ENCODE measurements at regions of chr9 and their contacts with region 1.

Region 1: GRCh38 chr9:127980706-127981558 is at the start of gene EEIG1:
- DNase-seq: peak; percentile 96
- H3K4me3 ChIP-seq: peak within 1 kb of the TSS; percentile 80
- H3K27ac ChIP-seq: peak within 1 kb of the TSS; percentile 96
- H3K4me1 ChIP-seq: peaks cover 66% of the 10 kb centered on the region
- CTCF ChIP-seq: no peak
- total RNA-seq, gene EEIG1: 25.8 and 34.7 TPM in 2 replicates

Region 2: DNA sequence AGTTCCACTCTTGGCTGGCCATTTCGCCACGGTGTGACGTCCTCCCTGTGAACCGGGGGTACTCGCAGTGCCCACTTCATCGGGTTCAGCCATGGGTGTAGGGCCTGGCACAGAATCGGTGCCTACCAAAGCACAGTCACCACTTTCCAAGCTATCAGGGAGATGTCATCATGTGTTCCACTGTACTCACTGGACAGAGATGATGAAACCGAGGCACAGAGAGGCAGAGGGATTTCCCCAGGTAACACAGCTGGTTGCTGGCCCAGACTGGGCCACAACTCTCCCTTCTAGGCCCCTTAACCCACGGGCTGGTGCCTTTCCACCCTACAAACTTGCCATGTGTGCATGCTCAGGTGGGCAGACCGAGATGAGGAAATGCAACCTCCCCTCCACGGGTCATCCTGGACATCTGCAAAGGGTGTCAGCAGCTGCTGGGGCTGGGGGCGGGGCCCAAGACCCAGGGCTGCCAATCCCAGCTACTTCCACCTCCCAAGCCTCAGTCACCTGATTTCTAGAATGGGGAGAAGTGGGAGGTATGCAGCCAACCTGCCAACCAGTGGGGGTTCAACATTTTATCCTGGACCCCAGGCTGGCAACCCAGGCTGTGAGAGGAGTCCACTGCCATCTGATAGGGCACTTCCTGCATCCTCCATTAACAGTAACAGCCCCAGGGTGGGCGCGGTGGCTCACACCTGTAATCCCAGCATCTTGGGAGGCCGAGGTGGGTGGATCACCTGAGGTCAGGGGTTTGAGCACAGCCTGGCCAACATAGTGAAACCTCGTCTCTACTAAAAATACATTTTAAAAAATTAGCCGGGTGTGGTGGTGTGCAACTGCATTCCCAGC is 201.6 kb before region 1 on chr9:
- CTCF ChIA-PET with region 1: no interaction called
- POLR2A ChIA-PET with region 1: interaction called, 6 read pairs
- intact Hi-C with region 1: loop called (anchors 5 kb)
- DNase-seq: peak; percentile 94
- H3K4me3 ChIP-seq: peak overlapping the region; percentile 88
- H3K27ac ChIP-seq: peak overlapping the region; percentile 95
- H3K4me1 ChIP-seq: peaks cover 72% of the 10 kb centered on the region
- CTCF ChIP-seq: no peak

Region 3: DNA sequence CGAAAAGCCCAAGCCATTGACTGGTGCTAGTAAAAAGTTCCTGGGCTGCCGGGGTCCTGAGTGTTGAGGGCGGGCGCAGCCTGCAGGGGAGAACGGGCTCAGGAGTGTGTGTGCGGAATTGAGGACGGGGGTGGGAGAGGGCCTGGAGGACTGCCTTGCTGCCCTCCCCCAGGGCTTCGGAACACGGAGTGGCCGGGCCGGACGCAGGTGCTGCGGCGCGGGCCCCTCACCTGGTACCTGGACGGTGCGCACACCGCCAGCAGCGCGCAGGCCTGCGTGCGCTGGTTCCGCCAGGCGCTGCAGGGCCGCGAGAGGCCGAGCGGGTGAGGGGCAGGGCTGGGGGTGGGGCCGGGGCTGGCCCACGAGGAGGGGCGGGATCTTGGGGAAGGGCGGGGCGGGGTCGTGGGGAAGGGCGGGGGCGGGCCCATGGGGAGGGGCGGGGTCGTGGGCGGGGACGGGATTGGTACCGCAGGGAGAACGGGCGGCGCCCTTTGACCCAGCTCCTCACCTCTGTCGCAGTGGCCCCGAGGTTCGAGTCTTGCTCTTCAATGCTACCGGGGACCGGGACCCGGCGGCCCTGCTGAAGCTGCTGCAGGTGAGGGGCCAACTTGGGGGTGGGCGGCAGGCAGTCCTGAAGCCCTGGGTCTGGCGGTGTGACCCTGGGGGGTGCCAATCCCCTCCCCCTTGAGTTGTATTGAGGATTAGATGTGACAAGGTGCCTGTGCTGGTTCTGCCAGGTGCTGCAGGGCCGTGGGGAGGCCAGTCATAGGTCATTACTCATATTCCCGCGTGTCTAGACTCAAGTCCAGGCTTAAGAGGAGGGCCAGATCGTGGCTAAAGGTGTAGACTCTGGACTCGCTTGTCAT is 171.2 kb before region 1 on chr9:
- CTCF ChIA-PET with region 1: no interaction called
- POLR2A ChIA-PET with region 1: no interaction called
- intact Hi-C with region 1: no loop called
- DNase-seq: peak; percentile 68
- H3K4me3 ChIP-seq: no peak overlapping the region
- H3K27ac ChIP-seq: peak overlapping the region; percentile 42
- H3K4me1 ChIP-seq: peaks cover 18% of the 10 kb centered on the region
- CTCF ChIP-seq: no peak

Region 4: DNA sequence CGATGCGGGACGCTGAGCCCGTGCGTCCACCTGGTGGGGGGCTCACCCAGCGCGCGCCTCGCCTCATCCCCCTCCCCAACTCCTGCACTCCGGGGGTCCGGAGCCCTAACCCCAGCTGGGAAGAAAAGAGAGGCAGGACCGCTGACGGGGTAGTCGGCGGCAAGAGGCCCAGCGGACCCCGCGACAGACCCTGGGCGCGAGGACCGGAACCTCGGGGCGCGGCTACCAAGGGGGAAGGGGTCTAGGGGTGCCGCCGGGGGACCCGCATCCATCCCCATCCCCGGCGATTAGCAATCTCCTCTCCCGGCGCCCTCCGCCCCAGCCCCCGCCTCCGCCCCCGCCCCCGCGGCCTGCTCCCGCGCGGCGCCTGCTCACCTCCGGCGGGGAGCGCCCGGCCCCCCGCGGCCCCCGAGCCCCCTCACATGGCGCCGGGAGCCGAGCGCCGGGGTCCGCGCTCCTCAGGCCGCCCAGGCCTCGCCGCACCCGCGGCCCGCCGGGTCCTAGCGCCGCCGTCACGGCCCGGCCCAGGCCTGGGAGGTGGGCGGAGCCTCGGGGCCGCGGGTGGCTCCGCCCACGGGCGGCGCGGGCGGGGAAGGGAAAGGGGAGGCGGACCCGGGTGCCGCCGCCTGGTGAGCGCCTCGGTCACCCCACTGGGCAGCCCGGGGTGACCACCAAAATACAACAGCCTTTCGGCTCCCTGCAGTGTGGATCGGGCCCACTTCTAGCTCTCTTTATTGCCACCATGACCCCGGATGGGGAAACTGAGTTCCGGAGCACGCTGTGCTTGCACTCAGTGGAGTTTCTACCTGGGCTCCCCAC is 81.6 kb before region 1 on chr9 and contains the start of gene ST6GALNAC6:
- CTCF ChIA-PET with region 1: no interaction called
- POLR2A ChIA-PET with region 1: no interaction called
- intact Hi-C with region 1: no loop called
- DNase-seq: peak; percentile 88
- H3K4me3 ChIP-seq: peak within 1 kb of the TSS; percentile 81
- H3K27ac ChIP-seq: peak within 1 kb of the TSS; percentile 94
- H3K4me1 ChIP-seq: peaks cover 67% of the 10 kb centered on the region
- CTCF ChIP-seq: no peak
- total RNA-seq, gene ST6GALNAC6: 38.8 and 43.7 TPM in 2 replicates

Region 5: DNA sequence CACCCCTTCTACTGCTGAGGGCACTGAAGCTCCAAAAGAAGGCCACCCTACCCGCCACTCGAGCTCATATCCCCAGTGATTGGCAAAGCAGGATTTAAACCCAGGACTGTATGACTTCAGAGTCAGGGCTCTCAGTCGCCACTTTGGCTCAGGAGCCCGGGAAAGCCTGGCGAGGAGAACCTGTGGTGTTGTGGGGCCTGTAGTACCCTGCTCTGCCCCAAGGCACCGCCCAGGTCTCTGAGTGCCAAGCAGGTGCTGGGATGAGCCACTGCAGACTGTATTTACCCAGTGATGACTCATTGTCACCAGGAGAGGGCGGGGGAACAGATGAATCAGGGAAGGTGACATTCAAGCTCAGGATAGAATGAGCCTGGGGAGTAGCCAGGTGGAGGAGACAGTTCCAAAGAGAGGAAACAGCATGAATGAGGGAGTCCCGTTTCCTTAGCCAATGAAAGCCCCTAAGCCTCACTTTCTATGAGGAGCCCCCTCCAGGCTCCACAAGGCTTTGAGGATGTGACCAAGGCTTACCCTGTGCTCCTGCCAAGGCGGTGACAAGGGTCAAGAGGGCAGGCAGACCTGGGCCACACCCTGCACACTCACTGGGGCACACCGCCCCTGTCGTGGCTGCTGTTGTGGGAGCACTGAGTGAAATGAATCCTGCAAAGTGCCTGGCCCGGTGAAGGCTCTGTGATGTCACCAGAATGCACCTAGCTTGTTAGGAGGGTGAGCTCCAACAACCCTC is 25.5 kb before region 1 on chr9:
- CTCF ChIA-PET with region 1: interaction called, 5 read pairs
- POLR2A ChIA-PET with region 1: no interaction called
- intact Hi-C with region 1: loop called (anchors 1 kb)
- DNase-seq: peak; percentile 81
- H3K4me3 ChIP-seq: no peak overlapping the region
- H3K27ac ChIP-seq: no peak overlapping the region
- H3K4me1 ChIP-seq: peaks cover 20% of the 10 kb centered on the region
- CTCF ChIP-seq: peak; percentile 80

Region 6: DNA sequence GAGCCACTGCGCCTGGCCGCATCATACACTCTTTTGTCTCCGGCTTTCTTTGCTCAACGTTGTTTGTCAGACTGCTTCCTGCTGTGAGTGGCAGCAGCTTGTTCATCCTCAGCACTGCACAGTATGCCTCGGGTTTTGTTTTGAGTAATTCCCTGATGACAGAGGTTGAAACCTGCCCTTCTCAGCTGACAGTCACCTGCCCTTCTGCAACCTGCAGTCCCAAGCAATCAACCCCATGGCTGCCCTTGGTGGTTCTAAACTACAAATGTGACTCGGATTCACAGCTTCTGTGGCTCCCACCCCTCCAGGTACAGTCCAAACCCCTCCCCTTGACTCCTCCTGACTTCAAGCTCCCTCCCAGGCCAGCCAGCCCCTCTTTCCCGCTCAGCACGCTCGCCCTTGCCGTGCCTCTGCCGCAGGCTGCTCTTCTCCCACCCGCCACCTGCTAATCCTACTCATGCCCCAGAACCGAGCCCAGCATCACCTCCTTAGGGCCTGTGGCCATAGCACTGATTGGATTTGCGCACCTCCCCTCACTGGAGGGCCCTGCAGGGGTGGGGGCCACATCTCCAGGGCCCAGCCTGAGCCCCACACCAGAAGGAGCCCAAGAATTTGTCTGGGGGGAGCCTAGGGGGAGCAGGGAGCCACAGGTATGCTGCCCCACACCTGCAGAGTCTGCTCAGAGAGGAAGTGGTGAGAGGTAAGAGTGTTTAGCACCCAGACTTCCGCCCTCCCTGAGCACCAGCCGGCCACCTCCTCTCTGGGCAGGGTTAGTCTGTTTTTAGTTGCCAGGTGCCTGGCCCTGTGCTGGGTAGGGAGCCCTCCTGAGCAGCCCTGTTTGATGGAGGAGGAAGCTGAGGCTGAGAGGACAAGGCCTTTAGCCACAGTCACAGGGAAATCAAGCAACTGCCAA is 10.3 kb before region 1 on chr9:
- CTCF ChIA-PET with region 1: no interaction called
- POLR2A ChIA-PET with region 1: interaction called, 19 read pairs
- intact Hi-C with region 1: no loop called
- DNase-seq: peak; percentile 91
- H3K4me3 ChIP-seq: peak overlapping the region; percentile 80
- H3K27ac ChIP-seq: peak overlapping the region; percentile 95
- H3K4me1 ChIP-seq: peaks cover 100% of the 10 kb centered on the region
- CTCF ChIP-seq: peak; percentile 23; the same call in 1 of the 2 replicates

Region 7: GRCh38 chr9:128007566-128008138 is 26.7 kb after region 1 on chr9:
- CTCF ChIA-PET with region 1: no interaction called
- POLR2A ChIA-PET with region 1: interaction called, 9 read pairs
- intact Hi-C with region 1: loop called (anchors 2 kb)
- DNase-seq: peak; percentile 92
- H3K4me3 ChIP-seq: peak overlapping the region; percentile 67
- H3K27ac ChIP-seq: peak overlapping the region; percentile 94
- H3K4me1 ChIP-seq: peaks cover 45% of the 10 kb centered on the region
- CTCF ChIP-seq: no peak

Region 8: DNA sequence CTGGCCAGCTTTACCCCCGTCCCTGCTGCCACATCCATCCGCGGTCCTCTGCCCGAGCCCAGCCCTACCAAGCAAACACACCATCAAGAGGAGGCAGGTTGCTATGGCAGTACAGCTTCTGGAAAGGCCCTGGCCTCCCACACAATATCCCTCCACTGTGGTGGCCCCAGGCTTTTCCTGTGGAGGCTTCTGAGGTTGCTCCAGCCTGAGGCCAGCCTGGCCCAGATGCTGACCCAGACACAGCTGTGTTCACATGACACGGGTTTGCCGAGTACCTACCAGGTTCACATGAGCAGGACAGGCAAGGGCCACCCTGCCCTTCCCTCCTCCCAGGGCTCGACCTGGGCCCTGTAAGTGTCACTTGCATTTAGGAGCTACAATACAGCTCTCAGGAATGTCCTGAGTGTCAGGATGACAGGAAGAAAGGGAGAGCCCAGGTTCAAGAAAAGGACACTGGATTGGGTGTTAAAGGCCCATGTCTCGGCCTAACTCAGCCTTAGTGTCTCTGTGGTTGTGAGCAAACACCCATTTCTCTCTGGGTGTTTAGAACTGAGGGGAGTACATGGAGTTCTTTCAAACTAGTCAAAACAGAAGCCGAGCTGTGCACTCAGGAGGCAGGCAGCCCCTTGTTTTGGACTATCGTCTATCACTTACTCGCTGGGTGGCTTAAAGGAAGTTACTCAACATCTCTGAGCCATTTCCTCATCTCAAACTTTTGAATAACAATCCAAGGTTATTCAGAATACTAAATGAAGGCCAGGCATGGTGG is 46.0 kb after region 1 on chr9:
- CTCF ChIA-PET with region 1: no interaction called
- POLR2A ChIA-PET with region 1: interaction called, 25 read pairs
- intact Hi-C with region 1: loop called (anchors 1 kb)
- DNase-seq: peak; percentile 39
- H3K4me3 ChIP-seq: peak overlapping the region; percentile 56
- H3K27ac ChIP-seq: peak overlapping the region; percentile 78
- H3K4me1 ChIP-seq: peaks cover 71% of the 10 kb centered on the region
- CTCF ChIP-seq: no peak

Region 9: GRCh38 chr9:128034821-128035764 is 54.2 kb after region 1 on chr9:
- CTCF ChIA-PET with region 1: no interaction called
- POLR2A ChIA-PET with region 1: interaction called, 7 read pairs
- intact Hi-C with region 1: loop called (anchors 1 kb)
- DNase-seq: peak; percentile 90
- H3K4me3 ChIP-seq: no peak overlapping the region
- H3K27ac ChIP-seq: peak overlapping the region; percentile 20
- H3K4me1 ChIP-seq: peaks cover 45% of the 10 kb centered on the region
- CTCF ChIP-seq: peak; percentile 97